ENCODE measurements at regions of chr5 and their contacts with region 1.

Region 1: DNA sequence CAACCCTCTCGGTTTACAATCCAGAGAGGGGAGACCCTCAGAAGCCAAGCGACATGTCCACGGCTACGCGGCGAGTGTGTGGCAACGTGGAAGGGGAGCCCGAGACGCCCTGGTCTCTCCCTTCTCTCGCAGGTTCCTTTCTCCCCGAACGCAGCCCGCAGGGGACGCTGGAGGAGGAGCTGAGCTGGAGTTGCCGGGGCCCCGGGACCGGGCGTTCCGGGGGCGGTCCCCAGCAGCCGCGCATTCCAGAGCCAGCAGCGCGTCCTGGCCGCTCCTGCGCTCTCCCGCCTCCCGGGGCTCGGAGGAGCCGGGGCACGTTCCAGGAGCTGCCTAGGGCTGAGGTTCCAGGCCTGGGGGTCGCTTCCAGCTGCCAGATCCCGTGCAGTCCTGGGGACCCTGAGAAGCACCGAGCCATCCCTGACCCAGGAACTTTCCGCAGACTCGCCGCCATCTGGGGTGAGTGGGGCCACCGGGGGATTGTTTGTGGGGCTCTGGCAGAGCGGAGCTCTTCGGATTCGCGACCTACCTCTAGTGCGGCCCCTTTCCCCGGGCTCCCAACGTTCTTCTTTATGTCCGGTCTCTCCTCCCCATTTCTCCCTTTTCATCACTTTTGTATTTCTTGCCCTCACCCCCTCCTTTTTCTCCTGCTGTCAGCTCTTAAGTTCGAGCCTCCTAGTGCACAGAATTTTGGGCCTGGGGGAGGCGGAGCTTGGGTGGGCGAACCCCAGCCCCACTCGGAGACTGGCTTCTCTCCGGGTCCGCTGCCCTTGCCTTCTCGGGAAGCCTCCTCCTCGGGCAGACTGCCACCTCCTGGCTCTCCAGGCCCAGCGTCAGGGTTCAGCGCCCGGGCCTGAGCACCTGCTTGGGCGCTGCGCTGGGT is at the start of gene SMIM3:
- DNase-seq: peak; percentile 58
- H3K4me3 Mint-ChIP-seq: peak within 1 kb of the TSS; percentile 100
- H3K27ac Mint-ChIP-seq: peak within 1 kb of the TSS; percentile 95
- H3K4me1 Mint-ChIP-seq: peaks cover 64% of the 10 kb centered on the region
- H3K27me3 Mint-ChIP-seq: no peaks in the 10 kb centered on the region
- total RNA-seq, gene SMIM3: 24.5 and 25.7 TPM in 2 replicates

Region 2: DNA sequence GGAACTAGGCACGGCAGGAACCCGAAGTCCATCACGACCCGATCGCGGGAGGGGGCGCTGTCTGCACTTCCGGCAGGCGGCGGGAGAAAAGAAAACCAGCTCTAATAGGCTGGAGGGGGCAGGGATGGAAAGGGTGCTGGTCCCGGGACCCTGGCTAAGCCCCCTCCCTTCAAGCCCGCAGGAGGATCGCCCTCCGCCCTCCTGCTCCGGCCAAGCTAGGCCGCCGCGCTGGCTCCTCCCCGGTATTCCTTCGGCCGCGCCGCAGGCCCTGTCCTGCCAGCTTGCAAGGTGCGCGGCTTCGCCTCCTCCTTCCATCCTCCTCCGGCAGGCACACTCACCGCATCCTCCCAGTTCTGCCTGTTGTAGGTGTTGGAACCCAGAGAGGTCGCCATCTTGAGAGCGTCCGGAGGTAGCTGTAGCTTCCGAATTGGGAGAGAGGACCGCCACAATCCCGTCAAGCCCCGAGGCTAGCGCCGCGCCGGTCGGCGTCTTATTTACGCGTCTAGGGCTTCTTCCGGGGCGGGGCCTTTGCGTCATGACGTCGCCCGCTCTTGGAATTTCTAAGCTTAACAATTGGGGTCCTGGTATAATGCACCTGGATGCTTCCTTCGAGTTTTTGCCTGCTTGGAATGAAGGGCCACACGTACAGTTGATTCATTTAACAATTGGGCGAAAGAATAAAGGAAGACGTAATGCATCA is 78.0 kb before region 1 on chr5 and contains the start of gene RBM22:
- intact Hi-C with region 1: loop called (anchors 1 kb)
- DNase-seq: peak; percentile 86
- H3K4me3 Mint-ChIP-seq: no peak within 1 kb of the TSS
- H3K27ac Mint-ChIP-seq: no peak within 1 kb of the TSS
- H3K4me1 Mint-ChIP-seq: peaks cover 6% of the 10 kb centered on the region
- H3K27me3 Mint-ChIP-seq: no peaks in the 10 kb centered on the region
- total RNA-seq, gene RBM22: 65.2 and 71.7 TPM in 2 replicates

Region 3: DNA sequence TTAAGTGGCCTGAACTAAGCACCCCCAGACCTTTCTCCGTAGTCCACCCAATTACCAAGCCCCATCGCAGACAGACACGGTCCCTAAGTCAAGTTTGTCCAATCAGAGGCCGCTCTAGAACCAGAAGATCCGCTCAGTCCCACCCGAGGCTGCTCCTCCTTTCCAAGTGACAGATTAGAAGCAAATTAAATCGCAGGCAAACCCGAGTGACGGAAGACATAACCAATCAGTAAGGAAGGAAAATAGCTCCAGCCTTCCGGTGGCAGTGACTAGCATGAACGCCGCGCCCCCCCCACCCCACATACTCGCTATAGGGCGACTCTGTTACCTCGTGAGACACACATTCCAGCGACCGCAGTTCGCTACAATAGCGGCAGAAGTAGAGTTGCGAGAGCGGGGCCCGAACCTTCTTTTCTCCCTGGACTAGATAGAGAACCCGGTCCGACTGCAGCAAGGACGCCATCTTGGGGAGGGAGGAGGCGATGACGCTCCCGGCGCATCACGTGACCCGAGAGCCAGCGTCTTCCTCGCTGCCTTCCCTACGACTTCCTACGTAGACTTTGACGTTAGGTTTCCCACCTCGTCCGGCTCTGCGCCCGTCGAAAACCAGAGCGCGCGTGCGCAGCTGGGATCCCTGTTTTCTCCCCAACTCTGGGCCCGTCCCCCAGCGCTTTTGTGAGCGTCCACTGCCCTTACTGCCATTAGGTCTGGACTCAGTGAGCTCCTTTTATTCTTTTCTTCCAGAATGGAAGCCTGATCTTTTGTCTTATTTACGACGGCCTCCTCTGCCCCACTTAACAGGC is 20.0 kb before region 1 on chr5 and contains the start of gene DCTN4:
- intact Hi-C with region 1: loop called (anchors 1 kb)
- DNase-seq: peak; percentile 90
- H3K4me3 Mint-ChIP-seq: no peak within 1 kb of the TSS
- H3K27ac Mint-ChIP-seq: no peak within 1 kb of the TSS
- H3K4me1 Mint-ChIP-seq: peaks cover 36% of the 10 kb centered on the region
- H3K27me3 Mint-ChIP-seq: no peaks in the 10 kb centered on the region
- total RNA-seq, gene DCTN4: 40.9 and 44.7 TPM in 2 replicates

Region 4: GRCh38 chr5:150846654-150847333 is 68.0 kb after region 1 on chr5:
- intact Hi-C with region 1: loop called (anchors 1 kb)
- DNase-seq: peak; percentile 57
- H3K4me3 Mint-ChIP-seq: peak overlapping the region; percentile 73
- H3K27ac Mint-ChIP-seq: peak overlapping the region; percentile 67
- H3K4me1 Mint-ChIP-seq: peaks cover 18% of the 10 kb centered on the region
- H3K27me3 Mint-ChIP-seq: peaks cover 2% of the 10 kb centered on the region

Region 5: GRCh38 chr5:151093476-151093889 is 314.7 kb after region 1 on chr5:
- intact Hi-C with region 1: loop called (anchors 5 kb)
- DNase-seq: no peak
- H3K4me3 Mint-ChIP-seq: peak overlapping the region; percentile 71
- H3K27ac Mint-ChIP-seq: peak overlapping the region; percentile 94
- H3K4me1 Mint-ChIP-seq: peaks cover 67% of the 10 kb centered on the region
- H3K27me3 Mint-ChIP-seq: no peaks in the 10 kb centered on the region